ENCODE measurements at regions of chr7 and their contacts with region 1.

Region 1: GRCh38 chr7:12067141-12067831 is 143.8 kb upstream of the TMEM106B start:
- DNase-seq: peak; percentile 20
- H3K4me3 Mint-ChIP-seq: no peak overlapping the region
- H3K27ac Mint-ChIP-seq: no peak overlapping the region
- H3K4me1 Mint-ChIP-seq: no peaks in the 10 kb centered on the region
- H3K27me3 Mint-ChIP-seq: peaks cover 12% of the 10 kb centered on the region

Region 2: DNA sequence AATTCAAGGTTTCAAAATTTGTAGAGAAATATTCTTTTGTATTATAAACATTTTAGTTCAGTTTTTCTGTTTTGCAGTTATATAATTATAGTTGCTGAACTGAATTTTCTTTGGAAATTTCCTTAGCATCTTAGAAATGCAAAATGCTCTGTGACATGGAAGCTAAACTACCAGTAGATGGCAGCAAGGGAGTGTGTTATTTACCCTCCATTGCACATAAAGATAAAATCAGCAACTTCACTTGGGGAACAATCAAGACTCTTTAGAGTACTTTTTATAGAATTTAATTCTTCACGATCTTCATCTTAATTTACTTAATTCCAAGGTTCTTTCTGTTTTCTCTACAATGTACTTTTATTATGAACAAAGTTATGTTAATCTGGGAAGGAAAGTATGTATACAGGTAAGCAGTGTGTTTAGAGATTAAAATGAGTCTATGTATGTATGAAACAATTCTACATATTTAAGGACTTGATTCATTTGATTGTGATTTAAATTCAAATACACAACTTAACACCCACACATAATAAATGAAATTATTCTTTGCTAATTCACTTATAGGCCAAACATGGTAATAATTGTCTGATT is 639.5 kb before region 1 on chr7:
- intact Hi-C with region 1: loop called (anchors 5 kb)
- DNase-seq: no peak
- H3K4me3 Mint-ChIP-seq: no peak overlapping the region
- H3K27ac Mint-ChIP-seq: no peak overlapping the region
- H3K4me1 Mint-ChIP-seq: no peaks in the 10 kb centered on the region
- H3K27me3 Mint-ChIP-seq: no peaks in the 10 kb centered on the region

Region 3: GRCh38 chr7:11951909-11952308 is 115.4 kb before region 1 on chr7:
- intact Hi-C with region 1: no loop called
- DNase-seq: no peak
- H3K4me3 Mint-ChIP-seq: no peak overlapping the region
- H3K27ac Mint-ChIP-seq: no peak overlapping the region
- H3K4me1 Mint-ChIP-seq: no peaks in the 10 kb centered on the region
- H3K27me3 Mint-ChIP-seq: no peaks in the 10 kb centered on the region

Region 4: DNA sequence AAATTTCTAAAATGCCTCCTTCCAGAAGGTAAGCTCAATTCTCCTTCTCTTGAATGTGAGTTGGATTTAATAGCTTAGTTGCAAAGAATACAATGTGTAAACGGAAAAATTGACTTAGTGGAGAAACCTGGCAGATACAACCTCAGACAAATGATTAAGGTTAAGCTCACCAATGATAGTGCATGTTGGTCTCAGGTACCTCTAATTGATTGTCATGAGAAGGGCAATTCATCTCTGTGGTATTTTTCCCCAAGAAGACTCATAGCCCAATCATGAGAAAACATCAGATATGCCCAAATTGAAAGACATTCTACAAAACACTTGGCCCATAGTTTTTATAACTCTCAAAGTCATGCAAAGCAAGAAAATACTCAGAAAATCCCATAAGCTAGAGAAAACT is 107.6 kb after region 1 on chr7:
- intact Hi-C with region 1: no loop called
- DNase-seq: no peak
- H3K4me3 Mint-ChIP-seq: no peak overlapping the region
- H3K27ac Mint-ChIP-seq: no peak overlapping the region
- H3K4me1 Mint-ChIP-seq: peaks cover 19% of the 10 kb centered on the region
- H3K27me3 Mint-ChIP-seq: peaks cover 19% of the 10 kb centered on the region

Region 5: GRCh38 chr7:12291870-12292269 is 224.6 kb after region 1 on chr7:
- intact Hi-C with region 1: loop called (anchors 1 kb)
- DNase-seq: no peak
- H3K4me3 Mint-ChIP-seq: no peak overlapping the region
- H3K27ac Mint-ChIP-seq: no peak overlapping the region
- H3K4me1 Mint-ChIP-seq: no peaks in the 10 kb centered on the region
- H3K27me3 Mint-ChIP-seq: peaks cover 10% of the 10 kb centered on the region